ENCODE measurements at regions of chr19 and their contacts with region 1.

Region 1: GRCh38 chr19:14366498-14366915 is 14.7 kb upstream of the ADGRE5 start:
- DNase-seq: peak; percentile 91

Region 2: DNA sequence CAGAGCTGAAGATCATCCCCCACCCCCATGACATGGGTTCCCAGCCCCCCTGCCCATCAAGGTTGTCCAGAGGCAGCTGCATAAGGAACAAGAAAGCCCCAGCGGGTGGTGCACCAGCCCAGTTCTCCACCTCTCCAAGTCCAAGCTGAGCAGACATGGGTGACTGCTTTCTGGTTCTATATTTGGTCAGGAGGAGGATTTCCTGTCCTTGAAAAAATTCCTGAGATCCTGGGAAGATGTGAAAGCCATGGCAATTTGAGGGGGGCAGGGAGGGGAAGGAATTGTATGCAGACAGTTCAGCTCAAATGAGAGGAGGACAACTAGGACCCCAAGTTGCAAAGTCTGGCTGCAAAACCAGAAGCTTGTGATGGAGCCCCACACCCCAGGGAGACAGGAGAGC is 40.6 kb before region 1 on chr19:
- intact Hi-C with region 1: no loop called
- DNase-seq: no peak

Region 3: GRCh38 chr19:14419106-14419813 is 52.8 kb after region 1 on chr19 and contains the start of gene DDX39A:
- intact Hi-C with region 1: loop called in 1 of 2 experiments (anchors 10 kb)
- DNase-seq: peak; percentile 99
- total RNA-seq, gene DDX39A: 37.4 to 38.7 TPM

Region 4: GRCh38 chr19:14472202-14472938 is 105.9 kb after region 1 on chr19:
- intact Hi-C with region 1: loop called in 1 of 2 experiments (anchors 5 kb)
- DNase-seq: peak; percentile 93

Measured in posterior vena cava (tissue), 2 donors.